CD4-positive, alpha-beta T cell (primary cell): ENCODE measurements at regions of chr1 and their contacts with region 1.

Region 1: GRCh38 chr1:86704458-86704971 is at the start of gene SH3GLB1:
- DNase-seq: peak; percentile 83 to 95 (median 86)
- ATAC-seq: peak; percentile 89
- H3K4me3 ChIP-seq: peak within 1 kb of the TSS; percentile 68
- H3K4me3 Mint-ChIP-seq: peak within 1 kb of the TSS; percentile 99
- H3K27ac ChIP-seq: peak within 1 kb of the TSS; percentile 84 to 86
- H3K27ac Mint-ChIP-seq: peak within 1 kb of the TSS; percentile 99
- H3K4me1 ChIP-seq: peaks cover 18% of the 10 kb centered on the region
- H3K4me1 Mint-ChIP-seq: peaks cover 60% of the 10 kb centered on the region
- H3K27me3 ChIP-seq: no peaks in the 10 kb centered on the region
- H3K27me3 Mint-ChIP-seq: no peaks in the 10 kb centered on the region
- CTCF ChIP-seq: peak; percentile 98
- total RNA-seq, gene SH3GLB1: 50.6 to 52.3 TPM

Region 2: GRCh38 chr1:85276215-85276977 is 1428.1 kb before region 1 on chr1 and contains the start of gene BCL10:
- CTCF ChIA-PET with region 1: no interaction called
- POLR2A ChIA-PET with region 1: interaction called, 15 read pairs
- intact Hi-C with region 1: no loop called
- DNase-seq: peak; percentile 93 to 99 (median 96)
- ATAC-seq: peak; percentile 95
- H3K4me3 ChIP-seq: peak within 1 kb of the TSS; percentile 94
- H3K4me3 Mint-ChIP-seq: peak within 1 kb of the TSS; percentile 92
- H3K27ac ChIP-seq: peak within 1 kb of the TSS; percentile 90 to 99
- H3K27ac Mint-ChIP-seq: peak within 1 kb of the TSS; percentile 95
- H3K4me1 ChIP-seq: peaks cover 28% of the 10 kb centered on the region
- H3K4me1 Mint-ChIP-seq: peaks cover 57% of the 10 kb centered on the region
- H3K27me3 ChIP-seq: no peaks in the 10 kb centered on the region
- H3K27me3 Mint-ChIP-seq: no peaks in the 10 kb centered on the region
- CTCF ChIP-seq: no peak
- total RNA-seq, gene BCL10: 50.0 to 52.0 TPM

Region 3: GRCh38 chr1:86389307-86389706 is 315.2 kb before region 1 on chr1:
- CTCF ChIA-PET with region 1: interaction called, 7 read pairs
- POLR2A ChIA-PET with region 1: interaction called, 10 read pairs
- intact Hi-C with region 1: loop called (anchors 10 kb)
- DNase-seq: peak in 3 of 14 experiments; percentile 50 to 70 (median 54)
- ATAC-seq: peak; percentile 80
- H3K4me3 ChIP-seq: peak overlapping the region; percentile 37
- H3K4me3 Mint-ChIP-seq: peak overlapping the region; percentile 77
- H3K27ac ChIP-seq: peak overlapping the region; percentile 8 to 73
- H3K27ac Mint-ChIP-seq: peak overlapping the region; percentile 78
- H3K4me1 ChIP-seq: peaks cover 4% of the 10 kb centered on the region
- H3K4me1 Mint-ChIP-seq: peaks cover 68% of the 10 kb centered on the region
- H3K27me3 ChIP-seq: no peaks in the 10 kb centered on the region
- H3K27me3 Mint-ChIP-seq: no peaks in the 10 kb centered on the region
- CTCF ChIP-seq: no peak

Region 4: DNA sequence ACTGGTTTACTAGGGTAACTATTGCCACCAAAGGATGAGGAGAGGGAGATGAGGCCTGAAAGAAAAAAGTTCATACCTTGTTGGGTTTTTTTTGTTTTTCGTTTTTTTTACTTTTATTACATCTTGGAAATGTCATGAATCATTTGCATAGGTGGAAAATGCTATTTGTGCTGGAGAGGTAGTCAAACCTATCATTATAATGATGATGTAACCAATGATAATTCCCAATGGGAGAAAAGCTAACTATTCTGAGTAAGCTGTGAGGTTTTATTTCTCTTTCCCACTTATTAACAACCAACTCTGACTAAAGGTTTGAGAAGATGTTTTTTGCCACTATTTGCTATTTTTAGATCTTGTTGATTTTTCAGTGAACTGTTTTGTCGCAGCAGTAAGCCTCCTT is 28.8 kb after region 1 on chr1:
- CTCF ChIA-PET with region 1: interaction called, 13 read pairs
- POLR2A ChIA-PET with region 1: interaction called, 20 read pairs
- intact Hi-C with region 1: no loop called
- DNase-seq: no peak
- ATAC-seq: no peak
- H3K4me3 ChIP-seq: no peak overlapping the region
- H3K4me3 Mint-ChIP-seq: no peak overlapping the region
- H3K27ac ChIP-seq: no peak overlapping the region
- H3K27ac Mint-ChIP-seq: peak overlapping the region; percentile 9
- H3K4me1 ChIP-seq: no peaks in the 10 kb centered on the region
- H3K4me1 Mint-ChIP-seq: peaks cover 12% of the 10 kb centered on the region
- H3K27me3 ChIP-seq: no peaks in the 10 kb centered on the region
- H3K27me3 Mint-ChIP-seq: no peaks in the 10 kb centered on the region
- CTCF ChIP-seq: no peak

Region 5: GRCh38 chr1:86913896-86914634 is 209.6 kb after region 1 on chr1 and contains the start of gene SELENOF:
- CTCF ChIA-PET with region 1: interaction called, 17 read pairs
- POLR2A ChIA-PET with region 1: interaction called, 103 read pairs
- intact Hi-C with region 1: loop called (anchors 10 kb)
- DNase-seq: peak; percentile 98 to 100 (median 99)
- ATAC-seq: peak; percentile 88
- H3K4me3 ChIP-seq: peak within 1 kb of the TSS; percentile 90
- H3K4me3 Mint-ChIP-seq: no peak within 1 kb of the TSS
- H3K27ac ChIP-seq: peak within 1 kb of the TSS; percentile 95 to 96
- H3K27ac Mint-ChIP-seq: no peak within 1 kb of the TSS
- H3K4me1 ChIP-seq: peaks cover 25% of the 10 kb centered on the region
- H3K4me1 Mint-ChIP-seq: peaks cover 53% of the 10 kb centered on the region
- H3K27me3 ChIP-seq: no peaks in the 10 kb centered on the region
- H3K27me3 Mint-ChIP-seq: no peaks in the 10 kb centered on the region
- CTCF ChIP-seq: no peak
- total RNA-seq, gene SELENOF: 74.1 to 74.9 TPM

Region 6: GRCh38 chr1:87335175-87335884 is 630.8 kb after region 1 on chr1:
- CTCF ChIA-PET with region 1: no interaction called
- POLR2A ChIA-PET with region 1: interaction called, 13 read pairs
- intact Hi-C with region 1: loop called in 1 of 2 experiments (anchors 10 kb)
- DNase-seq: peak; percentile 25 to 80 (median 44)
- ATAC-seq: peak; percentile 51
- H3K4me3 ChIP-seq: peak overlapping the region; percentile 55
- H3K4me3 Mint-ChIP-seq: peak overlapping the region; percentile 92
- H3K27ac ChIP-seq: no peak overlapping the region
- H3K27ac Mint-ChIP-seq: peak overlapping the region; percentile 66
- H3K4me1 ChIP-seq: peaks cover 33% of the 10 kb centered on the region
- H3K4me1 Mint-ChIP-seq: peaks cover 52% of the 10 kb centered on the region
- H3K27me3 ChIP-seq: peaks cover 0 to 12% of the 10 kb centered on the region in 2 experiments
- H3K27me3 Mint-ChIP-seq: peaks cover 26% of the 10 kb centered on the region
- CTCF ChIP-seq: no peak